ENCODE measurements at regions of chr6 and their contacts with region 1.

Region 1: GRCh38 chr6:107489636-107490565 is at the start of gene SOBP:
- DNase-seq: peak; percentile 80
- ATAC-seq: peak; percentile 56
- total RNA-seq, gene SOBP: 16.4 TPM

Region 2: GRCh38 chr6:107330168-107330567 is 159.7 kb before region 1 on chr6:
- intact Hi-C with region 1: no loop called
- DNase-seq: no peak
- ATAC-seq: no peak

Region 3: GRCh38 chr6:107435798-107436197 is 54.1 kb before region 1 on chr6:
- intact Hi-C with region 1: no loop called
- DNase-seq: no peak
- ATAC-seq: no peak

Region 4: DNA sequence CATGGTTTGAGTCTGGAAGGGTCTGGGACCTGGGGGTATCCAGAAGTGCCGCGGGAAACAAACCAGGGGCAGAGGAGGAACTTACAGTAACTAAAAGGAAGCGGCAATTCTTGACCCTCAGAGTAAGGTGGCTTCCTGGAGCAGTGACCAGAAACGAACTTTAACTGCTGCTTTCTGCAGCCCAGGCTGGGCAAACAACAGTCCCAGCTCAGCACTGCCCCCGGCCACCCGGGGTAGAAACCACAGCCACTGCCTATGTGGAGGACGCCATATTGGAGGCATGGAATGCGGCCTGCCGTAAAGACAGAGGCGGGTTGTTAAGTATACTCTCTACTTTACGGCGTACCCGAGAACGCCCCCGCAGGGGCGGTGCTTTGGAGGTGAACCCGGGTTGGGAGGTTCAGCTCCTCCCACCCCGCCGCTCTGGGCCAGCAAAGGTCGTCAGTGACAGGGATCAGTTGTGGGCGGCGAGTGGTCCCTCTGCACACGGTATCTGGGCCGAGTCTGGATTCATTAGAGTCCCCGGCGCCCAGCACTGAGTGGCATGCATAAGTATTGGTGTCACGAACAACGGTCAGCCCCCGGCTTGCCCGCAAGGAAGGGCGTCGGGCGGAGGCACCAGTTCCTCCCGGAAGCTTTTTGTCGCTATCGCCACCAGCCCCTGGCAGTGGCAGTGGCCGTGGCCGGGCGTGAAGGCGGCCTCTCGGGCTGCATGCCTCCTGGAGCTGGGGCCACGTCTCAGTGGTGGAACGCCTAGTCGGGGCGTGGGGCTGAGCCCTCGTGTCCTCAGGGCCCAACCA is 30.4 kb before region 1 on chr6 and contains the start of gene PDSS2:
- intact Hi-C with region 1: loop called (anchors 2 kb)
- DNase-seq: peak; percentile 100
- ATAC-seq: peak; percentile 99
- total RNA-seq, gene PDSS2: 15.6 TPM

Region 5: GRCh38 chr6:107532706-107533105 is 42.8 kb after region 1 on chr6:
- intact Hi-C with region 1: loop called (anchors 5 kb)
- DNase-seq: no peak
- ATAC-seq: peak; percentile 78

Region 6: DNA sequence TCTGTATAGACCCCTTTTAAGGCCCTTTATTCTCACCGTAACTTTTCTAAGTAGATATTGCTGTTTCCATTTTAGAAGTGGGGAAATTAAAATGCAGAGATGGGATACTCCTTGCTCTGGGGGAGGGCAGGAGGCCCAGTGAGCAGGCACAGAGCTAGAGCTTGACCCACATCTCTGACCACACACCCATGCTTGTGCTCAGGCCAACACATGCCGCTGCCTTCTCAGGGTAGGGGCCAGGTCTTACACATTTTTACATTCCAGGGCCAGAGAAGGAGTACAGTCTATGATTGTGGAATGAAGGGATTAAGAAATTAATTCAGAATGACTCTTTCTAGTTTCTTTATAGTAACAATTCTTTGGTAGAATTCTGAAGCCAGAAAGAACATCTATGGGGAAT is 104.8 kb after region 1 on chr6:
- intact Hi-C with region 1: loop called (anchors 5 kb)
- DNase-seq: no peak
- ATAC-seq: peak; percentile 70

Region 7: DNA sequence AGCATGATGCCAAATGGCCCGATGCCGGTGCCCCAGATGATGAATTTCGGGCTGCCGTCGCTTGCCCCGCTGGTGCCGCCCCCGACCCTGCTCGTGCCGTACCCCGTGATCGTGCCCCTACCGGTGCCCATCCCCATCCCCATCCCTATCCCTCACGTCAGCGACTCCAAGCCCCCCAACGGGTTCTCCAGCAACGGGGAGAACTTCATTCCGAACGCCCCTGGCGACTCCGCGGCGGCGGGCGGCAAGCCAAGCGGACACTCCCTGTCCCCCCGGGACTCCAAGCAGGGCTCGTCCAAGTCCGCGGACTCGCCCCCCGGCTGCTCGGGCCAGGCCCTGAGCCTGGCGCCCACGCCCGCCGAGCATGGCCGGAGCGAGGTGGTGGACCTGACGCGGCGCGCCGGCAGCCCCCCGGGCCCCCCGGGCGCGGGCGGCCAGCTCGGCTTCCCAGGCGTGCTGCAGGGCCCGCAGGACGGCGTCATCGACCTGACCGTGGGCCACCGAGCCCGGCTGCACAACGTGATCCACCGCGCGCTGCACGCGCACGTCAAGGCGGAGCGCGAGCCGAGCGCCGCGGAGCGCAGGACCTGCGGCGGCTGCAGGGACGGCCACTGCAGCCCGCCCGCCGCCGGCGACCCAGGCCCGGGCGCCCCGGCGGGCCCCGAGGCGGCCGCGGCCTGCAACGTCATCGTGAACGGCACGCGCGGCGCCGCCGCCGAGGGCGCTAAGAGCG is 144.6 kb after region 1 on chr6:
- intact Hi-C with region 1: no loop called
- DNase-seq: no peak
- ATAC-seq: peak; percentile 79

Region 8: DNA sequence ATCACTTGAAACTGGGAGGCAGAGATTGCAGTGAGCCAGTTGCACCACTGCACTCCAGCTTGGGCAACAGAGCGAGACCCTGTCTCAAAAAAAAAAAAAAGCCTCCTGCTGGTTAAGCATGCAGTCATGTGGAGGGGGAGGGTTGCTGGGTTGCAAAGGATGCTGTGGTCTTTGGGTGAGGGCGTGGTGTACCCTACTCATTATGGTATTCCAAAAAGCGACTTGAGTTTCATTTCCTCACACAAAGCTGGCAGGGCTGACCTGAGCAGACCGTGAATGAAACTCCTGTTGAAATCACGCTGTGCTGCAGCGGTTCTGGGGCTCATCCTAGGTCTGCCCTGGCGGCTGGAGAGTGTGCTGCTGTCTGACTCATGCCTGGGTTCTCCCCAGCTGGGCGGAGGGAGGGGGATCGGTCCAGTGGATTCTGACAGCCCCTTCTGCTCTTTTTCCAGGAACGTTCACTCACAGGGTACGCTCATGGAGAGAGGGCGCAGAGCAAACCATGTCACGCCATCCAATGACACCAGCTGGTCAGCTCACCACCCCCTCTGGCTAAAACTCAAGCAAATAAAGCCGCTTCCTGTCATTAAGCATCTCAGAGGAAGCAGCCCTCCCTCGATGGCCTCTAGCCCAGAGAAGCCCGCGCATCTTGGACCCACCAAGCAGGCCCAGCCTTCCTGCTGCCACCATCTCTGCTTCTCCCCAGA is 168.0 kb after region 1 on chr6:
- intact Hi-C with region 1: loop called (anchors 5 kb)
- DNase-seq: no peak
- ATAC-seq: peak; percentile 34

Region 9: GRCh38 chr6:107822176-107823046 is 332.5 kb after region 1 on chr6:
- intact Hi-C with region 1: no loop called
- DNase-seq: no peak
- ATAC-seq: no peak

Measured in Right ventricle myocardium inferior (tissue), 1 donor.